Natural killer cell (primary cell): ENCODE measurements at regions of chr9 and their contacts with region 1.

Region 1: GRCh38 chr9:83920927-83921707 is at the start of gene KIF27:
- DNase-seq: peak; percentile 96 to 98
- ATAC-seq: peak; percentile 89 to 98 (median 89)
- H3K4me3 ChIP-seq: peak within 1 kb of the TSS; percentile 78
- H3K4me3 Mint-ChIP-seq: peak within 1 kb of the TSS; percentile 94
- H3K27ac ChIP-seq: peak within 1 kb of the TSS; percentile 96
- H3K27ac Mint-ChIP-seq: peak within 1 kb of the TSS; percentile 92 to 93
- H3K4me1 ChIP-seq: peaks cover 12% of the 10 kb centered on the region
- H3K4me1 Mint-ChIP-seq: peaks cover 8 to 10% of the 10 kb centered on the region in 2 donors
- H3K27me3 ChIP-seq: no peaks in the 10 kb centered on the region
- H3K27me3 Mint-ChIP-seq: no peaks in the 10 kb centered on the region
- CTCF ChIP-seq: peak; percentile 54
- total RNA-seq, gene KIF27: 4.0 to 7.7 (median 4.6) TPM

Region 2: GRCh38 chr9:83980395-83981125 is 59.4 kb after region 1 on chr9 and contains the start of gene RMI1:
- intact Hi-C with region 1: loop called (anchors 2 kb)
- DNase-seq: peak; percentile 97 to 99
- ATAC-seq: peak; percentile 77 to 92 (median 80)
- H3K4me3 ChIP-seq: peak within 1 kb of the TSS; percentile 96
- H3K4me3 Mint-ChIP-seq: peak within 1 kb of the TSS; percentile 95
- H3K27ac ChIP-seq: peak within 1 kb of the TSS; percentile 98
- H3K27ac Mint-ChIP-seq: peak within 1 kb of the TSS; percentile 100
- H3K4me1 ChIP-seq: peaks cover 6% of the 10 kb centered on the region
- H3K4me1 Mint-ChIP-seq: peaks cover 50 to 59% of the 10 kb centered on the region in 2 donors
- H3K27me3 ChIP-seq: no peaks in the 10 kb centered on the region
- H3K27me3 Mint-ChIP-seq: no peaks in the 10 kb centered on the region
- CTCF ChIP-seq: no peak
- total RNA-seq, gene RMI1: 2.8 to 5.4 (median 3.0) TPM